K562 (cell line): ENCODE measurements at regions of chr11 and their contacts with region 1.

Region 1: DNA sequence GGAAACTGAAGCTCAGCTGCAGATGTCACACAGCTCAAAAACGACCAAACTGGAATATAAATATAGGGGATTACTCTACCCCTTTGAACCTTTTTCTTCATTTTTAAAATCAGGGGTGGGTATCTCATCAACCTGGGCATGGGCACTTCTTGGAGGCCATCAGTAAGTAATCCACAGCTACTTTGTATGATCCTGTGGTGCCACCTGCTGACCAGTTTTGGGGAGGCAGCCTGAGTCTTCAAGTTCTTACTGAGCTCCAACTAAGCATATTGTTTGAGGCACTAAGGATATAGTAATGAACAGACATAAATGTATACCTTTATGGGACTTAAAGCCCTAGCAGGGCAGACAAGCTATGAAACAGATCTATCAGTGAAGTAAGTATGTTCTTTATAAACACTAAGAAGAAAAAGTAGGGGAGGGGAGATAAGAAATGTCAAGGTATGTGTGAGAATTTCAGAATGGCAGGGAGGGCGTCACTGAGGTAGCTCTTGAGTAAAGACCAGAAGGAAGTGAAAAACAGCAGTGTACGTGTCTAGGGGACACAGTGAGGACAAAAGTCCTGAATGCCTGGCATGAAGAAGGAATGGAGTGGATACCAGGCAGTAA is 18.4 kb downstream of the TUB start:
- DNase-seq: peak; percentile 50 to 75 (median 60)
- ATAC-seq: peak; percentile 88
- H3K4me3 ChIP-seq: no peak overlapping the region
- H3K27ac ChIP-seq: no peak overlapping the region
- H3K4me1 ChIP-seq: peaks cover 0 to 3% of the 10 kb centered on the region in 2 experiments; a peak in 2 of 5 replicates
- H3K27me3 ChIP-seq: peaks cover 0 to 44% of the 10 kb centered on the region in 2 experiments; a peak in 3 of 5 replicates
- CTCF ChIP-seq: peak; percentile 69 to 80 (median 76)
- EP300 ChIP-seq: no peak
- POLR2A ChIP-seq: no peak
- RAD21 ChIP-seq: peak; percentile 83 to 84

Region 2: DNA sequence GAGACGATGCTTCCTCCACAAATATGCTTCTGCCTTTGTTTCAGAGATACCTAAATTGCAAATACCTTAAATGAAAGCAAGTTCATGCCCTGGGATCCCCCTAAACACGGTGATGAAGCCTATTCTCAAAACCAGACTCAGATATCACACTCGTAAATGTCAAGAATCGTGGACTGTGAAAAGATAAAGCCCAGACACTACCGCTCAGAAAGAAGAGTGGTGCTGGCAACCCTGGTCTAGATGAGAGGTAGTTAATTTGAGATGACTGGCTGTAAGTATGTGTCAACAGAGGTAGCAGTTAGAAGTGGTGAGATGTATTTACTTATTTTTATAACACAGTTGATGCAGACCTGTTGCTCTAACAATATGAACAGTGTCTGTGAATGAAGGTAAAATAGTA is 395.7 kb before region 1 on chr11:
- CTCF ChIA-PET with region 1: no interaction called
- POLR2A ChIA-PET with region 1: no interaction called
- in situ Hi-C with region 1: no loop called
- intact Hi-C with region 1: loop called (anchors 10 kb)
- DNase-seq: no peak
- ATAC-seq: no peak
- H3K4me3 ChIP-seq: no peak overlapping the region
- H3K27ac ChIP-seq: no peak overlapping the region
- H3K4me1 ChIP-seq: no peaks in the 10 kb centered on the region
- H3K27me3 ChIP-seq: no peaks in the 10 kb centered on the region
- CTCF ChIP-seq: no peak
- EP300 ChIP-seq: no peak
- POLR2A ChIP-seq: no peak
- RAD21 ChIP-seq: no peak

Region 3: DNA sequence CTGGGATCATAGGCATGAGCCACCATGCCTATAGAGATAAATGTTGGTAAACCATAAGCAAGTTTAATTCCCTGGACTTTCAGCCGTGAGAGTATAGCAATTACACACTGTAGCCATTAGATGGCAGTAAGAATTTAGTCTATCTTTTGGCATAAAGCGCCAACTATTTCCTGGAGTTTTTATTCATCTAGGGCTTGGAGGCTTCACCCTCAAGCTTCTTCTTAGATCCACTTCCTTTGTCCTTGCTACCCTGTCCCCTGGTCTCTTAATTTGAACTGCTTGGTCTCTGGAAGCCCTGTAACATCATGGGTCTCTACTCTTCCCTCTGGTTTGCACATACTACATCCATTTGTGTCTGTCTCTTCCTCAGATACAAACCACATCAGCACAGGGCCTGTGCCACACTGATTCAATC is 206.5 kb before region 1 on chr11:
- CTCF ChIA-PET with region 1: no interaction called
- POLR2A ChIA-PET with region 1: no interaction called
- in situ Hi-C with region 1: loop called (anchors 10 kb)
- intact Hi-C with region 1: loop called (anchors 2 kb)
- DNase-seq: peak; percentile 11 to 53 (median 28)
- ATAC-seq: peak; percentile 87
- H3K4me3 ChIP-seq: no peak overlapping the region
- H3K27ac ChIP-seq: no peak overlapping the region
- H3K4me1 ChIP-seq: no peaks in the 10 kb centered on the region
- H3K27me3 ChIP-seq: no peaks in the 10 kb centered on the region
- CTCF ChIP-seq: peak; percentile 50 to 81 (median 63); a peak in 5 of 6 replicates
- EP300 ChIP-seq: no peak
- POLR2A ChIP-seq: no peak
- RAD21 ChIP-seq: peak; percentile 48 to 81

Region 4: DNA sequence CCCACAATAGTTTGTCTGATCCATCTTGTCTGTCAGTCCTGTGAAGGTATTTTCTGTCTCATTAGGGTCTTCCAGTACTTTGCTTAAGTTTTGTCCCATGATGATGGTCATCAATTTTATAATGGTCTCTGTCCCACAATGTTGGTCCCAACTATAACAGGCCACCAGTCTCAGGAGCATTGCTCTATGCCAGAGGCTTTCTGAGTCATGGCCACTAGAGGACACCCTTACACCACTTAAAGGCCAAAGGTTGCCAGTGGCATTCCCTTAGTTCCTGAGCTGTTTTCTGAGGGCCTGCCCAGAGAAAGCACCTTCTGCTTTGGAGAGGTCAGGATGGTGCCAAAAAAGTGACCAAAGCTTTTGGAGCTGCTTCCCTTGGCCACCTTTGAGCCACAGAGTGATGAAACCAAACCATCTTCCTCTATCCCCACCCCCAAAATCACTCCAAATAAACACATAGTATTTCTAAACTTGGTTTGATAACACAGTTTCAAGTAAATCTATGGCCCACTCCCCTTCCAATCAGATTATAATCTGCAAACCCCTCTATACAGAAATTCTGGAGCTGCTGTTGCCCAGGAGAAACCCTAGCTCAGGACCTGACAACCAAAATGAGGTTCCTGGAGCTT is 92.9 kb before region 1 on chr11:
- CTCF ChIA-PET with region 1: interaction called, 17 read pairs
- POLR2A ChIA-PET with region 1: interaction called, 4 read pairs
- in situ Hi-C with region 1: loop called (anchors 5 kb)
- intact Hi-C with region 1: loop called (anchors 1 kb)
- DNase-seq: peak; percentile 59 to 71 (median 67)
- ATAC-seq: peak; percentile 96
- H3K4me3 ChIP-seq: no peak overlapping the region
- H3K27ac ChIP-seq: no peak overlapping the region
- H3K4me1 ChIP-seq: no peaks in the 10 kb centered on the region
- H3K27me3 ChIP-seq: peaks cover 0 to 17% of the 10 kb centered on the region in 2 experiments; a peak in 2 of 5 replicates
- CTCF ChIP-seq: peak; percentile 84 to 91 (median 86)
- EP300 ChIP-seq: no peak
- POLR2A ChIP-seq: no peak
- RAD21 ChIP-seq: peak; percentile 89 to 91

Region 5: DNA sequence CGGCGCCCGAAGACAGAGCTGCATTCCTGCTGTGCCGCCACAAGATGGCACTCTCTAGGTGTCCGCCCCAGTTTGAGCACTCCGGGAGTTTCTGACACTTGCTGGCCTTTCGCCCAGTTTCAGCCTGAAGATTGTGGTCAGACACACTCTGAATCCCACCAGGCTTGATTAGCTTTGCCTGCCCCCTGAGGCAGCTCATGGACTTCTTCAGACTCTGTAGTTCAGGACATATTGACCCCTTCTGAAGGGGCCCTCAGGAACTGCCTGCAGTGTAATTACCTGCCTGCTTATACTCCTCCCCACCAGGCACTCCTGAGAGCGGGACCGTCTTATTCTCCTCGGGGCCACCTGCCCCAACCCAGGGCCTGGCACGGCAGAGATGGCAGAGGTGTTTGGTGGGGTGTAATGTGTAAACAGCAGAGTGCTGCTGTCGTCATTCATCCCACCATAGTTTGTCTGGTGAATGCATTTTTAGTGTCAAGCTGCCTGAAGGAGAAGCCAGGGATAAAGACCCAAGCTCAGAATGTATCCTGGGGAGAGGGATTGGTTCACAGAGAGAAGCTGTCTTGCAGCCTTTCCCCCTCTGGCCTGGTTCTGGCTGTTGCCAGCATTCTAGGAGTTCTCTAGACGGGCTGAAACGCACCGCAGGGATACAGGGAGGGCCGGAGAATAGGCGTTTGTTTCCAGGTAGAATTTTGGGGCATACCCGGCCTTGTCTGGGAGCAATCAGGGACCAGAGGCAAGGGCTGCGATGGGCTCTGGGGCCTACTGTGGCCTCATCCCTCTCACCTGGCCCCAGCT is 65.9 kb before region 1 on chr11:
- CTCF ChIA-PET with region 1: interaction called, 6 read pairs
- POLR2A ChIA-PET with region 1: interaction called, 3 read pairs
- in situ Hi-C with region 1: no loop called
- intact Hi-C with region 1: loop called (anchors 2 kb)
- DNase-seq: peak; percentile 76 to 82 (median 80)
- ATAC-seq: peak; percentile 93
- H3K4me3 ChIP-seq: no peak overlapping the region
- H3K27ac ChIP-seq: no peak overlapping the region
- H3K4me1 ChIP-seq: no peaks in the 10 kb centered on the region; a peak in 2 of 5 replicates
- H3K27me3 ChIP-seq: peaks cover 14 to 53% of the 10 kb centered on the region in 2 experiments; a peak in 4 of 5 replicates
- CTCF ChIP-seq: peak; percentile 84 to 90 (median 87)
- EP300 ChIP-seq: no peak
- POLR2A ChIP-seq: no peak
- RAD21 ChIP-seq: peak; percentile 72 to 79

Region 6: DNA sequence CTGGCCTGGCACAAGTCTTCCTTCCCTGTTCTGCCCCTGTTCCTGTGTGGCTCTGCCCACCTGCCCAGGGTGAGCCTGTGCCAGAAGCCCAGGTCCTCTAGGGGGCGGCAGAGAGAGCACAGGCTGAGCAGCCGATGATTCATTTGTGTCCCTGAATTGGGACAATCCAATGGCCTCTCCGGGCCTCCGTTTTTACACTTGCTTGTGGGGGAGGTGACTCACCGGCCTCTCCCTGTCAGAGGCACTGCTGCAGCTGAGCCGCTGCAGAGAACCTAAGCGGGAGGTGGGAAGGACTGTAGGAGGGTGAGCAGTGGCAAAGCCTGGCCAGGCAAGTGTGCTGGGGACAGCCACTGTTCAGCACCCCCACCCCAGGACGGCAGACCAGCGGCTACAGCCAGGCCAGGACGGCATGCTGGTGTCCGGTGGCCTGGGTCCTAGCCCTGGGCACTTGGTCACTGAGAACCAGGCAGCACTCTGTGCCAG is 229.5 kb after region 1 on chr11:
- CTCF ChIA-PET with region 1: no interaction called
- POLR2A ChIA-PET with region 1: no interaction called
- in situ Hi-C with region 1: no loop called
- intact Hi-C with region 1: no loop called
- DNase-seq: peak; percentile 80 to 84 (median 84)
- ATAC-seq: peak; percentile 97
- H3K4me3 ChIP-seq: no peak overlapping the region
- H3K27ac ChIP-seq: no peak overlapping the region
- H3K4me1 ChIP-seq: peaks cover 3 to 6% of the 10 kb centered on the region in 2 experiments; a peak in 3 of 5 replicates
- H3K27me3 ChIP-seq: peaks cover 0 to 34% of the 10 kb centered on the region in 2 experiments; a peak in 3 of 5 replicates
- CTCF ChIP-seq: peak; percentile 71 to 79 (median 77)
- EP300 ChIP-seq: no peak
- POLR2A ChIP-seq: no peak
- RAD21 ChIP-seq: peak; percentile 16 to 40; a peak in 2 of 4 replicates